Spleen (tissue), 13 donors: ENCODE measurements at regions of chr5 and their contacts with region 1.

Region 1: GRCh38 chr5:151126199-151126645 is 31.4 kb downstream of the ANXA6 start:
- DNase-seq: peak; percentile 95
- H3K4me3 ChIP-seq: peak overlapping the region in 1 of 8 donors; percentile 35
- H3K27ac ChIP-seq: peak overlapping the region; percentile 40 to 90 (median 82)
- H3K4me1 ChIP-seq: peaks cover 29 to 96% (median 67%) of the 10 kb centered on the region in 6 donors
- H3K27me3 ChIP-seq: no peaks in the 10 kb centered on the region
- CTCF ChIP-seq: peak; percentile 66 to 92 (median 88)
- POLR2A ChIP-seq: no peak

Region 2: DNA sequence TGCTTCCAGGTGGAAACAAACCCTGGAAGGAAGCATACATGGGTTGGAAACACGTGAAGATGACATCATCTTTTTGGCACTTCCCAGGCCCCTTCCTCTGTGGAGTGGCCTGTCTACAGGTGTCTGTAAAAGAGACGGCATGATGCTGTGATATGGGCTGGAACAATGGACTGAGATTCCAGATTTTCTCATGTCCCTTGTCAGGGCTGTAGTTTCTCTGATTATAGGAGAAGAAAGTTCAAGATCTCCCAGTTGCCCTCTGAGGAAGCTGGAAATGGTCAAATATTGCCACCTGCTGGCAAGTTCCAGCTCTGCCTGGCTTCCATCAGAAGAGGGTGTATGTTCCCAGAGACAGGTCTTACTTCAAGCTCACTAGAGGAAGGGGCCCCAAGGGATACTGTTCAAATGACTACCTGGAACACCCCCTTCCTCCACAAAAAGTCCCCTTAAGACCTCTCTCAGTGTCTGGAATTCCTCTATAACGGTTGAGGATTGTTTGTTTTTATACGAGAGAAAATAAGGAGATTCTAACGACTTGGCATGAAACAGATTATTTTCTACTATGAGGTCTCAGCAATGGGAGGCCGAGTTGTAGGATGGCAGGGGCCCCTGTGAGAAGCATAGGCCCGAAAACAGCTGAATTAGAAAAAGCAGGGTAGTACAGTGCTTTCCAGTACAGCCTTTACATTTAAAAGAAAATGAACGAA is 38.6 kb after region 1 on chr5:
- intact Hi-C with region 1: loop called (anchors 5 kb)
- DNase-seq: peak; percentile 85
- H3K4me3 ChIP-seq: no peak overlapping the region
- H3K27ac ChIP-seq: peak overlapping the region in 3 of 8 donors; percentile 10 to 37 (median 19)
- H3K4me1 ChIP-seq: peaks cover 8 to 44% (median 19%) of the 10 kb centered on the region in 6 donors
- H3K27me3 ChIP-seq: no peaks in the 10 kb centered on the region
- CTCF ChIP-seq: peak; percentile 91 to 96 (median 95)
- POLR2A ChIP-seq: no peak

Region 3: DNA sequence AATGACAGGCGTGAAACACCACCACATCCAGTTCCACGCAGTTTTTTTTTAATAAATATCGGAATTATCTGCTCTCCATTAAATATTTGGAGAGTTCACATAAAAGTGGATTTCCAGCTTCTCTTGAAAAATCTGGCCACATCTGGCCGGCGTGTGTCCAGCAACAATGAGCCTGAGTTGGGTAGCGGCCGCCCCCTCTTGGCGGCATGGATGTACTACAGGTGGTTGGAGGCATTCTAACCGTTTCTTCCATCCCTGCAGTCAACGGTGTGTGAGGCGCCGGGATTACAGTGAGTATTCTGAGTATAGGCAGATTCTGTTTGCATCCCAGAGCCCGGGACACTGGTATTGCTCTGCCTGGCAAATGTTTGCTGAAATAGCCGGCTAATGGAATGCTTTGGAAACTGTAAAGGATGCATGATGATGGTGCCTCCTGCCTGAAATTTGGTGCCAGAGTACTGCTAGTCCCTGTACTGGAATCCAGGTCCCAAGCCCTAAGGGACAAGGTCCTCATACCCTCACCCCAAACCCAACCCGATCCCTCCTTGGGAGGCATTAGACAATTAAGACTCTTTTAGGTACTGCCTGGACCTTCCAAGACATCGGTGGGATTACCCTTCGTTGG is 113.1 kb after region 1 on chr5:
- intact Hi-C with region 1: loop called (anchors 5 kb)
- DNase-seq: peak; percentile 93
- H3K4me3 ChIP-seq: peak overlapping the region in 4 of 8 donors; percentile 1 to 53 (median 16)
- H3K27ac ChIP-seq: peak overlapping the region in 2 of 8 donors; percentile 69
- H3K4me1 ChIP-seq: peaks cover 6 to 82% (median 44%) of the 10 kb centered on the region in 6 donors
- H3K27me3 ChIP-seq: no peaks in the 10 kb centered on the region
- CTCF ChIP-seq: peak; percentile 48 to 94 (median 83)
- POLR2A ChIP-seq: no peak